GM10248 (cell line): ENCODE measurements at regions of chr15 and their contacts with region 1.

Region 1: GRCh38 chr15:52551762-52552161 is 17.1 kb downstream of the ARPP19 start:
- DNase-seq: no peak
- CTCF ChIP-seq: no peak

Region 2: GRCh38 chr15:52563604-52564003 is 11.8 kb after region 1 on chr15:
- CTCF ChIA-PET with region 1: interaction called, 16 read pairs
- POLR2A ChIA-PET with region 1: interaction called, 3 read pairs
- DNase-seq: no peak
- CTCF ChIP-seq: no peak

Region 3: GRCh38 chr15:52584414-52584813 is 32.7 kb after region 1 on chr15:
- CTCF ChIA-PET with region 1: no interaction called
- POLR2A ChIA-PET with region 1: no interaction called
- DNase-seq: no peak
- CTCF ChIP-seq: no peak